ENCODE measurements at regions of chr12 and their contacts with region 1.

Region 1: DNA sequence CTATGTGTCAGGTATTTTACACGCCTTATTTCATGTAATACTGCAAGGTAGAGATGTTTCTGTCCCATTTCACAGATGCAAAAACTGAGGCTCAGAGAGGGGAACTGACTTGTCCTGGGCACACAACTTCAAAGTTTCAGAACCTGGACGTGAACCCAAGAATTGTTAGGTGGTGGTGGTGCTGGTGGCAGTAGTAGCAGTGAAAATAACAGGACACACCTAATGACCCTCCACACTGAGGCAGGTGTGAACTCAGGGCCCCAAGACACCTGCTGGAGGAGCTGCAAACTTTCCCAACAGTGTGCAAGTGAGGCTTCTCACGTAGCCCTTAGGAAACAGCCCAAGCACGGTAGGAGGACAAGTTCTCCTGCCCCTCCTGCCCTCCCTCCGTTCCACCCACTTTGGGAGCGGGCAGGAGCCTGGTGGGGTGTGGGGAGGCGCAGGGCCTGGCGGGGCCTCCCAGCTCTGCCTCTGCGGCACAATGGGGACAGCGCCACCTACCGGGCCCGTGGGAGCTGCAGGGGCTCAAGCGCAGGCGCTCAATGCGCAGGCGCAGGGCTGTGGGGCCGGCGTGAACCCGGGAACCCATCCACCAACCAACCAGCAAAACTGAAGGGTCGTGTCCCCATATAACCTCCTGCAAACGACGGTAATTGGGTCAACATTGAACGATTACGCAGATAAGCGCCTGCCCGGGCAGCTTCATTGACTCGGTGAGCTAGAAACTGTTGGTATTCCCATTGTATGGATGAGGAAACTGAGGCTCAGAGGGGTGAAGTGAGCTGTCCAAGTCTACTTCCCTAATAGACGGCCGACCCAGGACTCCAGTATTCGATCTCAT is 12.0 kb upstream of the TRPV4 start:
- DNase-seq: peak; percentile 27
- H3K4me3 ChIP-seq: peak overlapping the region; percentile 54
- H3K27ac ChIP-seq: no peak overlapping the region
- H3K27me3 ChIP-seq: no peaks in the 10 kb centered on the region
- CTCF ChIP-seq: peak; percentile 97

Region 2: GRCh38 chr12:109782326-109782703 is 62.9 kb before region 1 on chr12:
- CTCF ChIA-PET with region 1: no interaction called
- POLR2A ChIA-PET with region 1: no interaction called
- DNase-seq: no peak
- H3K4me3 ChIP-seq: no peak overlapping the region
- H3K27ac ChIP-seq: no peak overlapping the region
- H3K27me3 ChIP-seq: no peaks in the 10 kb centered on the region
- CTCF ChIP-seq: no peak

Region 3: GRCh38 chr12:109804820-109805761 is 40.1 kb before region 1 on chr12:
- CTCF ChIA-PET with region 1: interaction called, 134 read pairs
- POLR2A ChIA-PET with region 1: no interaction called
- DNase-seq: no peak
- H3K4me3 ChIP-seq: no peak overlapping the region
- H3K27ac ChIP-seq: no peak overlapping the region
- H3K27me3 ChIP-seq: no peaks in the 10 kb centered on the region
- CTCF ChIP-seq: peak; percentile 97

Region 4: GRCh38 chr12:109833307-109834189 is 11.7 kb before region 1 on chr12 and contains the start of gene TRPV4:
- CTCF ChIA-PET with region 1: interaction called, 43 read pairs
- POLR2A ChIA-PET with region 1: interaction called, 3 read pairs
- DNase-seq: no peak
- H3K4me3 ChIP-seq: peak within 1 kb of the TSS; percentile 70
- H3K27ac ChIP-seq: no peak within 1 kb of the TSS
- H3K27me3 ChIP-seq: no peaks in the 10 kb centered on the region
- CTCF ChIP-seq: no peak
- polyA plus RNA-seq, gene TRPV4: 5.2 and 6.8 TPM in 2 replicates

Region 5: GRCh38 chr12:109863847-109864712 is 18.9 kb after region 1 on chr12:
- CTCF ChIA-PET with region 1: interaction called, 43 read pairs
- POLR2A ChIA-PET with region 1: no interaction called
- DNase-seq: no peak
- H3K4me3 ChIP-seq: no peak overlapping the region
- H3K27ac ChIP-seq: no peak overlapping the region
- H3K27me3 ChIP-seq: no peaks in the 10 kb centered on the region
- CTCF ChIP-seq: no peak

Region 6: DNA sequence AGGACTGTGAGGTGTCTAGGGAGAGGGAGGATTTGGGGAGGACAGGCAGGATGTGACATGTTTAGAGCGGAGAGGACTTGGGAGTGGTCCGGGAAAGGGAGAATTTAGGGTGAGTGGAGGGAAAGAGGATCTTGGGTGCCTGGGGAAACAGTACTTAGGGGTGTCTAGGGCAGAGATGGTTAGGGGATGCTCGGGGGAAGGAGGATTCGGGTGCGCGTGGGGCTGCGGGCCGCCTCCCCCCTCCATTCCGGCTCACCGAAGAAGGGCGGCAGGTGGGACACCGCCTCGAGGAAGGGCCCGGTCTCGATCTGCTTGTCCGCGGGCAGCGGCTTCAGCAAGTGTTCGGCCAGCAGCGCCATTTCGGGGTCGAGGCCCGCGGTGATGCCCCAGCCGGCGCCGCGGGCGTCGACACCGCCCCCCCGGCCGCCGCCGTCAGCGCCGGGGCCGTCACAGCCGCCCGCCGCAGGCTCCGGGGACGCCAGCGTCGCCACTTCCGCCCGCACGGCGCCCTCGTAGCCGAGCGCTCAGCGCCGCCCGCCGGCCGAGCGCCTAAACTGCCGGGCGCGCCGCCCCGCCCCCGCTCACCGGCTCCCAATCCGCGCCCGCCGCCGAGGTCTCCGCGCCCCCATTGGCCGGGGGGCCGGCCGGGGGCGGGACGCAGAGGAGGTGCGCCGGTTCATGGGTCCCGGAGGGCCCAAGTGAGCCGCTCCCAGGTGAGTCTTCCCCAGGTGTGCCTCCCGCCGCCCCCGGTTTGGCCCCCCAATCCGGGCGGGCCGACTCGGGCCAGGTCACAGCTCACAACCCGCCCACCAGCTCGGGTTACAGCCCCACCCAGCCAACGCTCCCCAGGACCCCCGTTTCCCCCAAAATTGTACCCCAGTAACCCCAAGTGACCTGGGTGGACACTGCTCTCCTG is 35.1 kb after region 1 on chr12 and contains the start of gene GLTP:
- CTCF ChIA-PET with region 1: interaction called, 11 read pairs
- POLR2A ChIA-PET with region 1: no interaction called
- DNase-seq: no peak
- H3K4me3 ChIP-seq: peak within 1 kb of the TSS; percentile 89
- H3K27ac ChIP-seq: peak within 1 kb of the TSS; percentile 11
- H3K27me3 ChIP-seq: no peaks in the 10 kb centered on the region
- CTCF ChIP-seq: 0 out of 2 replicates have a peak, but pooled peaks have one; percentile 19
- polyA plus RNA-seq, gene GLTP: 28.8 and 30.3 TPM in 2 replicates

Region 7: DNA sequence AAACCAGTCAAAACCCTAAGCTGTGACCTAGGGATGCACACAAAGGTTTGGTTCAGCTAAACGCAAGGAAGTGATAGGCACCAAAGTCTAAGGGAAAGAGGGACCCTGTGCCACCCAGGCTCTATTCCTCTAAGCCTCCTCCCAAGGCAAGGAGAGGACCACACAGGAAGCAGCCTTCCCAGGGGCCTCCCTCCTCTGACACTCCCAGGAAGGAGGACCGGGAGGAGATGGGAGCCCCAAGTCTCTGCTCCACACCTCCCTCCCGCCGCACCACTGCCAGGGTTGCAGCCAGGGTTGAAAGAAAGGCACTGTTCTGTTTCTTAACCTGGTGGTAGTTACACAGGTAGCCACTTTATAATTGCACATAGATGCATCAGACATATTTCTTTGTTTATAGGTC is 76.8 kb after region 1 on chr12:
- CTCF ChIA-PET with region 1: no interaction called
- POLR2A ChIA-PET with region 1: no interaction called
- DNase-seq: no peak
- H3K4me3 ChIP-seq: no peak overlapping the region
- H3K27ac ChIP-seq: no peak overlapping the region
- H3K27me3 ChIP-seq: no peaks in the 10 kb centered on the region
- CTCF ChIP-seq: no peak